Dendritic cell treated with granulocyte-macrophage colony-stimulating factor and Interleukin-4, amounts not matched to agents 40 ng/mL and 50 ng/mL, for 4 days (primary cell): ENCODE measurements at regions of chr1 and their contacts with region 1.

Region 1: DNA sequence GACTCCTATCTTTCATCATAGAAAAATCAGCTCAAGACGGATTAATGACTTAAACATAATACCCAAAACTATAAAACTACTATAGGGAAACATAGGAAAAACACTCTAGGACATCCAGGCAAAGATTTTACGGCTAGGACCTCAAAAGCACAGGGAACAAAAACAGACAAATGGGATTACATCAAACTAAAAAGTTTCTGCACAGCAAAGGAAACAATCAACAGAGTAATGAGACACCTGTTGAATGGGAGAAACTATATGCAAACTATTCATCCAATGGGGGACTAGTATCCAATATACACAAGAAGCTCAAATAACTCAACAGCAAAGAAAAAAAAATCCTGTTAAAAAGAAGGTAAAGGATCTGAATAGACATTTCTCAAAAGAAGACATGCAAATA is 18.6 kb downstream of the NSL1 start:
- H3K4me3 Mint-ChIP-seq: no peak overlapping the region
- H3K27ac Mint-ChIP-seq: peak overlapping the region; percentile 77
- H3K4me1 Mint-ChIP-seq: peaks cover 80% of the 10 kb centered on the region
- H3K27me3 Mint-ChIP-seq: no peaks in the 10 kb centered on the region

Region 2: DNA sequence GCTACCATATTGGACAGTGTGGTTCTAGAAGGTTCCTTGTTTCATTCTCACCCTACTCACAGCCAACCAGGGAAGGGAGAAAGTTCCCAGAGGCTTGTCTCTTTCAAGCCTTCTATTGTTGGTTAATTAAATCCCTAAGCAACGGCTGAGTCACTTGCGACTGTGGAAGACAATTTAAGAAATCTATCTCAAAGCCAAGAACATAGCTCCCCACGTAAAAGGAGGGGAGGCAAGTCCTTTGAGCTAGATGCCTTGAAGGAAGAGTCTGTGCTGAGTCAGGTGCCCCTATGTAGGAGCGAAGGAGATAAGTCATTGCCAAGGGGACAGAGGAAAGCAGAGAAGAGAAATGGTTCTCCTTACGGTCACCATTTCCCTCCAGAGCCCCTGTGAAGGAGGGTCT is 567.2 kb before region 1 on chr1:
- intact Hi-C with region 1: no loop called
- H3K4me3 Mint-ChIP-seq: no peak overlapping the region
- H3K27ac Mint-ChIP-seq: no peak overlapping the region
- H3K4me1 Mint-ChIP-seq: peaks cover 5% of the 10 kb centered on the region
- H3K27me3 Mint-ChIP-seq: no peaks in the 10 kb centered on the region

Region 3: DNA sequence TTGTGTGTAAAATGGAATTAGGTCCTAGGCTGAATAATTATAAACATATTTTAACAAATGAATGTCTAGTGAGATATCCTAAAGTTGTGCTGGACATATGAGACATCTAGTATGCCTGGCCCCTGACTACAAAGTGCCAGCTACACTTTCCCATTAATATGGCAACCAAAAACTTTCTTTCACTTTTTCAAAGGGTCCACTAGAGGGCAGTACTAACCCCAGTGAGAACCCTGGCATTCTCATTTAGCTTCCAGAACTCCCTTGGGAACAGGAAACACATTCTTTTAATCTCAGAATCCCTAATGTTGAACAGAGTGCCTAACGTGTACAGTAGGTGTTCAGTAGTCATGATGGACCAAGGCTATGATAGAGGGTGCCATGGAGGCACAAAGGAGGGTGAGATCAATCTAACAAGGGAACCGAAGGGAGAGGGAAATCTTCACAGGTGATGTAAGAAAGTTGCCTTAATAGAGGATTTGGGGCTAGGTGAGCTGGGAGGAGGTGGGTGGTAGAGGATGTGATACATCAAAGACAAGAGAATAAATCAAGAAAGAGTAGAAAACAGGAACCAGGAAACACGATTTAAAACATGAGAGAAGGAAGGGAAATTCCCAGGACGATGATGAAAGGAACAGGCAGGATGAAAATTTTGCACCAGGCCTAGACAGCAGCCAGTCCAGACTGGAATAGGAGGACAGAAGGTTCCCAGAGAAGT is 23.0 kb before region 1 on chr1:
- intact Hi-C with region 1: loop called (anchors 2 kb)
- H3K4me3 Mint-ChIP-seq: peak overlapping the region; percentile 48
- H3K27ac Mint-ChIP-seq: peak overlapping the region; percentile 68
- H3K4me1 Mint-ChIP-seq: peaks cover 36% of the 10 kb centered on the region
- H3K27me3 Mint-ChIP-seq: no peaks in the 10 kb centered on the region